ENCODE measurements at regions of chr2 and their contacts with region 1.

Region 1: DNA sequence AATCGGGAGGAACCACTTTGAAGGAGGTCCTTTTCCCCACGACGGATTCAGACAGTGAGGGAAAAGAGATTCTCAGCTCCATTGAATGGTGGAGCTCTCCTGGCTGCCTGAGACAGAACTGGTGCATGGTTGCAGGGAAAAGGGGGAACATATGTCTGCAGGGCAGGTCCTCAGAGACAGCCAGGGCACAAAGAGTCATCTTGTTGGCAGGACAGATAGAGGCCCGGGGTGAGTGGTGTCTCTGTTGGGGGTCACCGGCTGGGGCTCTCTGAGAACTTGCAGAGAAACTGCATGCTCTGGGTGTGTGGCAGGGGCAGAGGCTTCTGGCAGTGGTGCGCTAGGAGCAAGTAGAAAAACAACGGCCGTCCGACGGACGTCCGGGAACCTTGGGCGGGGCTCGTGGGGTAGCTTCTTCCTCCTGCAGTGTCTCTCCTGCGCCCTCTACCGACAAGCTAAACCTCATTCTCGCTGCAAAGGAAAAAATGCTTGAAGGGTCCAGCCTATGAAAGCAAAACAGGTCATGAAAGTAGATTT is 94.3 kb downstream of the CDCA7 start:
- DNase-seq: peak; percentile 75 to 87
- H3K4me3 ChIP-seq: peak overlapping the region; percentile 47; the same call in 1 of the 2 replicates
- H3K27ac ChIP-seq: no peak overlapping the region
- H3K4me1 ChIP-seq: 0 out of 2 replicates have a peak, but pooled peaks cover 5% of the 10 kb centered on the region
- H3K27me3 ChIP-seq: peaks cover 12% of the 10 kb centered on the region; the same call in 1 of the 2 replicates
- CTCF ChIP-seq: peak; percentile 97

Region 2: GRCh38 chr2:172806493-172806892 is 642.5 kb before region 1 on chr2:
- CTCF ChIA-PET with region 1: no interaction called
- POLR2A ChIA-PET with region 1: no interaction called
- intact Hi-C with region 1: loop called (anchors 5 kb)
- DNase-seq: peak; percentile 23 to 68
- H3K4me3 ChIP-seq: no peak overlapping the region
- H3K27ac ChIP-seq: no peak overlapping the region
- H3K4me1 ChIP-seq: no peaks in the 10 kb centered on the region
- H3K27me3 ChIP-seq: no peaks in the 10 kb centered on the region
- CTCF ChIP-seq: peak; percentile 100

Region 3: GRCh38 chr2:173027181-173028128 is 421.6 kb before region 1 on chr2:
- CTCF ChIA-PET with region 1: no interaction called
- POLR2A ChIA-PET with region 1: no interaction called
- intact Hi-C with region 1: loop called (anchors 5 kb)
- DNase-seq: peak; percentile 73 to 84
- H3K4me3 ChIP-seq: no peak overlapping the region
- H3K27ac ChIP-seq: no peak overlapping the region
- H3K4me1 ChIP-seq: no peaks in the 10 kb centered on the region
- H3K27me3 ChIP-seq: no peaks in the 10 kb centered on the region
- CTCF ChIP-seq: peak; percentile 100

Region 4: DNA sequence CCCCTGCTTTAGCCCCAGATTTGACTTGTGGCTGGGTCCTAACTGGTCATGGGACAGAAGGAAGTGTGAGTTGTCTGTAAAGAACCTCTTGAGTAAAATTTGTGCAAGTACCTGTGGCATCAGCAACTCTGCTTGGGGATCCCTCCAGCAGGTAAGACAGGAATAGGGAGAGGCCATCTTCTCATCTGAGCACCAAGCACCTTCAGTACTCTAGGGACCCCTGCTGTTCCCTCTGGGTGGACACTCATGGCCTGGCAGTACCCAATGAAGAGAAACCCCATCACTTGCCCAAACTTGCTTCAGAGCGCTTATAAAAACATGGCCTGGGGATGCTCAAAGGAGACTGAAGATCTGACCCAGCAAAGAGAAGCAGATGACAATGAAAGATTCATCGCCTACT is 218.4 kb after region 1 on chr2:
- CTCF ChIA-PET with region 1: no interaction called
- POLR2A ChIA-PET with region 1: no interaction called
- intact Hi-C with region 1: loop called (anchors 5 kb)
- DNase-seq: no peak
- H3K4me3 ChIP-seq: no peak overlapping the region
- H3K27ac ChIP-seq: no peak overlapping the region
- H3K4me1 ChIP-seq: peaks cover 6% of the 10 kb centered on the region; the same call in 1 of the 2 replicates
- H3K27me3 ChIP-seq: peaks cover 4% of the 10 kb centered on the region; the same call in 1 of the 2 replicates
- CTCF ChIP-seq: peak; percentile 26; the same call in 1 of the 2 replicates